Calu3 (cell line): ENCODE measurements at regions of chr12 and their contacts with region 1.

Region 1: DNA sequence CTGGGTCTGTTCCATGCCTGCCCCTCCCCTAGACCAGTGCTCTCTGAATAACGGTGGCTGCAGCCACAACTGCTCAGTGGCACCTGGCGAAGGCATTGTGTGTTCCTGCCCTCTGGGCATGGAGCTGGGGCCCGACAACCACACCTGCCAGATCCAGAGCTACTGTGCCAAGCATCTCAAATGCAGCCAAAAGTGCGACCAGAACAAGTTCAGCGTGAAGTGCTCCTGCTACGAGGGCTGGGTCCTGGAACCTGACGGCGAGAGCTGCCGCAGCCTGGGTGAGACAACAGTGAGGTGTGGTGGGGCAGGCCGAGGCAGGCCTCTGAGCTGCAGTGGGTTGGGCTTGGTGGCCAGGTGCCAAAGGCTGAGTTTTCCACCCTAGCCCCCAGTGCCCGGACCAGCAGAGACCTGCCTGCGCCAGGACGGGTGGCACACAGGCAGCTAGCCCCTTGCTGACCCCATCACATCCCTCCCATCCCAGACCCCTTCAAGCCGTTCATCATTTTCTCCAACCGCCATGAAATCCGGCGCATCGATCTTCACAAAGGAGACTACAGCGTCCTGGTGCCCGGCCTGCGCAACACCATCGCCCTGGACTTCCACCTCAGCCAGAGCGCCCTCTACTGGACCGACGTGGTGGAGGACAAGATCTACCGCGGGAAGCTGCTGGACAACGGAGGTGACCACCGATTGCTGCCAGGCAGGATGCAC is 28.2 kb upstream of the LRP1-AS start:
- DNase-seq: peak; percentile 88
- H3K4me3 Mint-ChIP-seq: no peak overlapping the region
- H3K27ac Mint-ChIP-seq: no peak overlapping the region
- H3K4me1 Mint-ChIP-seq: no peaks in the 10 kb centered on the region
- H3K27me3 Mint-ChIP-seq: peaks cover 13% of the 10 kb centered on the region
- CTCF ChIP-seq: peak; percentile 64

Region 2: GRCh38 chr12:57124259-57124877 is 51.2 kb before region 1 on chr12:
- CTCF ChIA-PET with region 1: interaction called, 39 read pairs
- intact Hi-C with region 1: loop called (anchors 2 kb)
- DNase-seq: peak; percentile 84
- H3K4me3 Mint-ChIP-seq: no peak overlapping the region
- H3K27ac Mint-ChIP-seq: no peak overlapping the region
- H3K4me1 Mint-ChIP-seq: no peaks in the 10 kb centered on the region
- H3K27me3 Mint-ChIP-seq: peaks cover 21% of the 10 kb centered on the region
- CTCF ChIP-seq: peak; percentile 91

Region 3: GRCh38 chr12:57268264-57268663 is 92.7 kb after region 1 on chr12:
- CTCF ChIA-PET with region 1: no interaction called
- intact Hi-C with region 1: no loop called
- DNase-seq: no peak
- H3K4me3 Mint-ChIP-seq: no peak overlapping the region
- H3K27ac Mint-ChIP-seq: no peak overlapping the region
- H3K4me1 Mint-ChIP-seq: no peaks in the 10 kb centered on the region
- H3K27me3 Mint-ChIP-seq: no peaks in the 10 kb centered on the region
- CTCF ChIP-seq: no peak